ENCODE measurements at regions of chr11 and their contacts with region 1.

Region 1: DNA sequence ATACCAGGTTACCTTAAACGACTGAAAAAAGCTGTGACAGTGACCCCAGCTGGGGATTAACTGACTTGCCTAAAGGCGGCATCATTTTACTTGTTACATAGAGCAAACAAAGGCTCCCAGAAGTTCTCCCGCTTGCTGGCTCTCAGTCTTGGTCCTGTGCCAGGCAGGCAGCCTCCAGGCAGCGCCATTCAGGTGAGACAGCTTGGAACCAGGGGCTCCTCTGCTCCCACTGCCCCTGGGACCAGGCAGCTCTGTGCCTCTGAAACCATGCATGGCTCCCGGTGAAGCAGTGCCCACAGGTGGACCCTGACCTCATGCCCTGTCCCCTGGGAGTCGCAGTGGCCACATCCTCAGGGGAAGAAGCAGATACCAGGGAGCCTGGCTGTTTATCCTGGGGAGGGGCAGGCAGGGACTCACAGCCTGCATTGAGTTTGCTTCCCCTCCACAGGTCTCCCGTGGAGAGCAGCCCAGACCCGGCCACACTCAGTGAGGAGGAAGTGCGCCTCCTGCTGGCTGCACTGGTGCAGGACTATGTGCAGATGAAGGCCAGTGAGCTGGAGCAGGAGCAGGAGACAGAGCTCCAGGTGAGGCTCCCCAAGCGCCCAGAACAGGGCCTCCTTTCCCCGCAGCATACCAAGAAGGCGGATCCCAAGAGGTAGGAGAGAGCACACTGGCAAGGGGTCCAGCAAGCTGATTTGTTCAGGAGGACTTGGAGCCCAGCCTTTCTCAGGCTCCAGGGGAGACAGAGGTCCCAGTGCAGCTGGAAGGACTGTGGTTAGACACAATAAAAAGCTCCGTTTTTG is 15.6 kb upstream of the CYP2R1 start:
- DNase-seq: peak in 1 of 2 experiments; percentile 23
- H3K4me3 ChIP-seq: no peak overlapping the region; the same call in 1 of the 2 replicates
- H3K27ac ChIP-seq: no peak overlapping the region
- H3K4me1 ChIP-seq: 0 out of 2 replicates have a peak, but pooled peaks cover 5% of the 10 kb centered on the region
- H3K27me3 ChIP-seq: no peaks in the 10 kb centered on the region
- CTCF ChIP-seq: peak; percentile 78

Region 2: GRCh38 chr11:14789879-14790484 is 117.6 kb before region 1 on chr11:
- CTCF ChIA-PET with region 1: interaction called, 15 read pairs
- POLR2A ChIA-PET with region 1: no interaction called
- intact Hi-C with region 1: loop called (anchors 5 kb)
- DNase-seq: no peak
- H3K4me3 ChIP-seq: no peak overlapping the region
- H3K27ac ChIP-seq: no peak overlapping the region
- H3K4me1 ChIP-seq: no peaks in the 10 kb centered on the region
- H3K27me3 ChIP-seq: no peaks in the 10 kb centered on the region
- CTCF ChIP-seq: peak; percentile 67

Region 3: GRCh38 chr11:14835491-14836105 is 72.0 kb before region 1 on chr11:
- CTCF ChIA-PET with region 1: no interaction called
- POLR2A ChIA-PET with region 1: no interaction called
- intact Hi-C with region 1: no loop called
- DNase-seq: no peak
- H3K4me3 ChIP-seq: no peak overlapping the region
- H3K27ac ChIP-seq: no peak overlapping the region
- H3K4me1 ChIP-seq: no peaks in the 10 kb centered on the region
- H3K27me3 ChIP-seq: no peaks in the 10 kb centered on the region
- CTCF ChIP-seq: no peak

Region 4: DNA sequence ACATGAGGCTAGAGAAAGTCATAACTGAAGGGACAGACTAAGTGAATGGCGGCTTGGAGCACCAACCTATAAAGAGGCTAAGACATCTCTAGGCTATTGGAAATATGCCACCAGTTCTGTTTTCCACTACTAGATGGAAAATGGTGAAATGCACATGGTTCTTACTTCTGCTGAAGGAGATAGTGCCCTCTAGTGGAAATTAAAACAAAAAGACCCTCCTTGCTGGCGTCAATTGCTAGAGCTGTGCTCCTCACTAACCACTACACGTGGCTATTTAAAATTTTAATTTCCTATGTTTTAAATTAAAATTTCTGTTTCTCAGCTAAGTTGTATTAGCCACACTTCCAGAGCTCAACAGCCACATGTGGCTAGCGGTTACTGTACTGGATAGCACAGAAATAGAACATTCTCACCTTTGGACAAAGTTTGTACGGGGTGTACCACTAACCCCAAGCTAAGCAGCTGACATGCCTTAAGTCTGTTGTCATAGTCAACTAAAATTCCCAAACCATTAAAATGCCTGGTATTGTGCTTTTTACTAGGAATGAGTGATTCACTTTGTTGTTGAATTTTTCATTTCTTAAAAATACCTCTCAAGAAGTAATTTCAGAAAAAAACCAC is 98.6 kb after region 1 on chr11:
- CTCF ChIA-PET with region 1: no interaction called
- POLR2A ChIA-PET with region 1: no interaction called
- intact Hi-C with region 1: loop called (anchors 10 kb)
- DNase-seq: no peak
- H3K4me3 ChIP-seq: no peak overlapping the region
- H3K27ac ChIP-seq: no peak overlapping the region
- H3K4me1 ChIP-seq: no peaks in the 10 kb centered on the region
- H3K27me3 ChIP-seq: no peaks in the 10 kb centered on the region
- CTCF ChIP-seq: peak; percentile 56; the same call in 1 of the 2 replicates

Region 5: DNA sequence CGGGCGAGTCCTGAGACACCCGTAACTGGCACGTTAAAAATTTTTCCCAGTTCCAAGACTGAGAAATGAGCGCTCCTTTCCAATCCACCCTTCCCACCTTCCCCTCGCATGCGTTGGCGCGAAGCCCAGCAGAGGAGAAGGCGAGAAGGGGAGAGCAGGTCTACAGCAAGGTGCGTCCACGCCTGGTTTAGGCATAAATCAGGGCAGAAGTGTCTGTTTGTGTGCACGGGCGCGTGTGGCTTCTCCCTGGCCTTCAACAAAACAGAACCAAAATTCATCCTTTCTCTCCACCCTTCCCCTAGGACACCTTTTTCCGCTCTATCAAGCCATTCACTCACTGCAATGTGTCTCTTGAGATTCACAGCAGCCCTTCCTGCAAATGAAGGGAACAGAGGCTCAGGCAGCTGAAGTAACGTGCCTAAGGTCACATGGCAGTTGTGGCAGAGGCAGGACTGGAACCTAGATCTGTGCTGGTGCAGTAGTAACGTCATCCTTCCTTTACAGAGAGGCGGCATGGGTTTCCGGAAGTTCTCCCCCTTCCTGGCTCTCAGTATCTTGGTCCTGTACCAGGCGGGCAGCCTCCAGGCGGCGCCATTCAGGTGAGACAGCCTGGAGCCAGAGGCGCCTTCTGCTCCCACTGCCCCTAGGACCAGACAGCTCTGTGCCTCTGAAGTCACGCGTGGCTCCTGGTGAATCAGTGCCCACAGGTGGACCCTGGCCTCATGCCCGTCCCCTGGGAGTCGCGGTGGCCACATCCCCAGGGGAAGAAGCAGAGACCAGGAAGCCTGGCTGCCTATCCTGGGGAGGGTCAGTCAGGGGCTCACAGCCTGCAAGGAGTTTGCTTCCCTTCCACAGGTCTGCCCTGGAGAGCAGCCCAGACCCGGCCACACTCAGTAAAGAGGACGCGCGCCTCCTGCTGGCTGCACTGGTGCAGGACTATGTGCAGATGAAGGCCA is 166.9 kb after region 1 on chr11:
- CTCF ChIA-PET with region 1: no interaction called
- POLR2A ChIA-PET with region 1: no interaction called
- intact Hi-C with region 1: loop called (anchors 10 kb)
- DNase-seq: peak in 1 of 2 experiments; percentile 33
- H3K4me3 ChIP-seq: no peak overlapping the region
- H3K27ac ChIP-seq: no peak overlapping the region
- H3K4me1 ChIP-seq: no peaks in the 10 kb centered on the region
- H3K27me3 ChIP-seq: no peaks in the 10 kb centered on the region
- CTCF ChIP-seq: peak; percentile 78

Region 6: DNA sequence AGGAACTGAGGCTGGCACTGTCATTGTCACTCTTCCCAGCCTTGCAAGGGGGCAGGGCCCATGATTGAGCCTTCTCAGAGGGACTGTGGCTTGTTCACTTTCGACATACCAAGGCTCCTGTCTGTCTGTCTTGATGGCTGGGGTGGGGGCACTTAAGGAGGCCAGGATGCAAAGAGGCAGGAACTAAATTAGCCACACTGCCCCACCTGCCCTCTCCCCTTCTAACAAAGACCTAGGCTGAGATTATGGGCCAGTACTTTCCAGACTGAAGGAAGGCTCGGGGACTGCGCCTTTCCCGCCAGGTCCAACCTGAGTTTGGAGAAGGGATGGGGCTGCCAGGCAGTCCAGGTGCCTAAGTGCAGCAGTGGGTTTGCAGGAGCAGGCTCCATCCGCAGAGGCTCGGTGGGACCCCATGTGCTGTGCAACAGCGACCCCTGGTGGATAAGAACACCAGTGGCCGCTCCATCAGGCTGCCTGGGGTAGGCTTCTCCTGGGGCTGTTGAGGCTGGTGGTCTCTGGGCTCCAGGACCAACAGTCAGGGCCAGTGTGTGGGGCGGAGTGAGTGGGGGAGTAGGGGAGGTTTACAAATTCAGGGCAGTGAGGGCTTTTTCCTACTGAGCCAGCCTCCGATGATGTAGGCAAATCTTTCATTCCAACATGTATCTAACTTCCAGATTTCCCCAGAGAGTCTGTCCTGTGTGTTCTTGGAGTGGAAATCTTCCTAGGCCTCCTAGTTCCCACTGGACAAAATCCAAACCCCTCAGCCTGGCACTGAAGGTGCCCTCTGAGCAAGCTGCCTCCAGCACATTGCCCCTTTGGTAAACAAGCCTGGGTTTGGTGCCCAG is 301.0 kb after region 1 on chr11:
- CTCF ChIA-PET with region 1: no interaction called
- POLR2A ChIA-PET with region 1: no interaction called
- intact Hi-C with region 1: loop called (anchors 2 kb)
- DNase-seq: peak in 1 of 2 experiments; percentile 41
- H3K4me3 ChIP-seq: no peak overlapping the region
- H3K27ac ChIP-seq: no peak overlapping the region
- H3K4me1 ChIP-seq: no peaks in the 10 kb centered on the region
- H3K27me3 ChIP-seq: no peaks in the 10 kb centered on the region
- CTCF ChIP-seq: peak; percentile 84

Region 7: GRCh38 chr11:15471040-15471894 is 563.7 kb after region 1 on chr11:
- CTCF ChIA-PET with region 1: no interaction called
- POLR2A ChIA-PET with region 1: no interaction called
- intact Hi-C with region 1: no loop called
- DNase-seq: no peak
- H3K4me3 ChIP-seq: no peak overlapping the region
- H3K27ac ChIP-seq: no peak overlapping the region
- H3K4me1 ChIP-seq: no peaks in the 10 kb centered on the region
- H3K27me3 ChIP-seq: no peaks in the 10 kb centered on the region
- CTCF ChIP-seq: no peak

Region 8: GRCh38 chr11:15565880-15566279 is 658.3 kb after region 1 on chr11:
- CTCF ChIA-PET with region 1: no interaction called
- POLR2A ChIA-PET with region 1: no interaction called
- intact Hi-C with region 1: no loop called
- DNase-seq: no peak
- H3K4me3 ChIP-seq: no peak overlapping the region
- H3K27ac ChIP-seq: no peak overlapping the region
- H3K4me1 ChIP-seq: no peaks in the 10 kb centered on the region
- H3K27me3 ChIP-seq: no peaks in the 10 kb centered on the region
- CTCF ChIP-seq: no peak